Activated CD4-positive, alpha-beta T cell treated with anti-CD3 and anti-CD28 coated beads, Interleukin-2, amount 10 ng/mL, durations not matched to agents 24 days and 14 days (primary cell): ENCODE measurements at regions of chr17 and their contacts with region 1.

Region 1: DNA sequence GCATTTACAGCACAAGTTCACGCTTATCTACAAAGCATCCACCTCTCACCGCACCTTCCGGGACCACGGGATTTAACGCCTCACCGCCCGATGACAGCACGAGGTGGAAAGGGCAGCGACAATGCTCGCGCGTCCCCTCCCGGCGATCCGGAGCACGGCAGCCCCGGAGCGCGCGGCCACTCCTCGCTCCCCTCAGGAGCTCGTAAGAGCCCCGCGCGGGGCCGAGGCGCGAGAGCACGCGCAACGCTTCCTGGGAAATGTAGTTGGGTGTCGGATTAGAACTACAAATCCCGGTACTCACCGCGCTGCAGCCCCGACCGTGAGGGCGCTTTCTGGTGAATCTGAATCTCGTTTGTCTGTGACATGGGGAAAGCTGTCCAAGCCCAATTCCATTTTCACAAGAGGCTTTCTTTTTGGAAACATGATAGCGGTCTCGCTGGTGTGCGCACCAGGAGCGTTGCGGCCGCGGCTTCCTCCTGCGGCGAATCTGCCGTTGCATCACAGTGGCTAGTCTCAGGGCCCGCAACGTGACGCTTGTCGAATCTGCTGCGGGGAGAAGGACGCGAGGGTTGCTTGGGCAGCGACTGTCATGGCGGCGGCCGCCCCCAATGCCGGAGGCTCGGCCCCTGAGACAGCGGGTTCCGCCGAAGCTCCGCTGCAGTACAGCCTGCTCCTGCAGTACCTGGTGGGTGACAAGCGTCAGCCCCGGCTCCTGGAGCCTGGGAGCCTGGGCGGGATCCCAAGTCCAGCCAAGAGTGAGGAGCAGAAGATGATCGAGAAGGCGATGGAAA is at the start of gene TIMM22:
- DNase-seq: peak; percentile 97
- H3K4me3 Mint-ChIP-seq: peak within 1 kb of the TSS; percentile 99
- H3K27ac Mint-ChIP-seq: peak within 1 kb of the TSS; percentile 98
- H3K4me1 Mint-ChIP-seq: peaks cover 18% of the 10 kb centered on the region
- H3K27me3 Mint-ChIP-seq: no peaks in the 10 kb centered on the region
- total RNA-seq, gene TIMM22: 14.7 and 15.7 TPM in 2 replicates

Region 2: GRCh38 chr17:416293-417206 is 580.2 kb before region 1 on chr17:
- intact Hi-C with region 1: loop called (anchors 2 kb)
- DNase-seq: peak; percentile 91
- H3K4me3 Mint-ChIP-seq: peak overlapping the region; percentile 93
- H3K27ac Mint-ChIP-seq: peak overlapping the region; percentile 100
- H3K4me1 Mint-ChIP-seq: peaks cover 79% of the 10 kb centered on the region
- H3K27me3 Mint-ChIP-seq: no peaks in the 10 kb centered on the region

Region 3: GRCh38 chr17:752002-752619 is 244.6 kb before region 1 on chr17 and contains the start of gene GEMIN4:
- intact Hi-C with region 1: loop called (anchors 1 kb)
- DNase-seq: peak; percentile 100
- H3K4me3 Mint-ChIP-seq: peak within 1 kb of the TSS; percentile 100
- H3K27ac Mint-ChIP-seq: peak within 1 kb of the TSS; percentile 98
- H3K4me1 Mint-ChIP-seq: peaks cover 35% of the 10 kb centered on the region
- H3K27me3 Mint-ChIP-seq: no peaks in the 10 kb centered on the region
- total RNA-seq, gene GEMIN4: 71.4 and 80.3 TPM in 2 replicates

Region 4: GRCh38 chr17:794876-795275 is 201.9 kb before region 1 on chr17:
- intact Hi-C with region 1: loop called (anchors 5 kb)
- DNase-seq: peak; percentile 82
- H3K4me3 Mint-ChIP-seq: no peak overlapping the region
- H3K27ac Mint-ChIP-seq: no peak overlapping the region
- H3K4me1 Mint-ChIP-seq: peaks cover 4% of the 10 kb centered on the region
- H3K27me3 Mint-ChIP-seq: no peaks in the 10 kb centered on the region

Region 5: DNA sequence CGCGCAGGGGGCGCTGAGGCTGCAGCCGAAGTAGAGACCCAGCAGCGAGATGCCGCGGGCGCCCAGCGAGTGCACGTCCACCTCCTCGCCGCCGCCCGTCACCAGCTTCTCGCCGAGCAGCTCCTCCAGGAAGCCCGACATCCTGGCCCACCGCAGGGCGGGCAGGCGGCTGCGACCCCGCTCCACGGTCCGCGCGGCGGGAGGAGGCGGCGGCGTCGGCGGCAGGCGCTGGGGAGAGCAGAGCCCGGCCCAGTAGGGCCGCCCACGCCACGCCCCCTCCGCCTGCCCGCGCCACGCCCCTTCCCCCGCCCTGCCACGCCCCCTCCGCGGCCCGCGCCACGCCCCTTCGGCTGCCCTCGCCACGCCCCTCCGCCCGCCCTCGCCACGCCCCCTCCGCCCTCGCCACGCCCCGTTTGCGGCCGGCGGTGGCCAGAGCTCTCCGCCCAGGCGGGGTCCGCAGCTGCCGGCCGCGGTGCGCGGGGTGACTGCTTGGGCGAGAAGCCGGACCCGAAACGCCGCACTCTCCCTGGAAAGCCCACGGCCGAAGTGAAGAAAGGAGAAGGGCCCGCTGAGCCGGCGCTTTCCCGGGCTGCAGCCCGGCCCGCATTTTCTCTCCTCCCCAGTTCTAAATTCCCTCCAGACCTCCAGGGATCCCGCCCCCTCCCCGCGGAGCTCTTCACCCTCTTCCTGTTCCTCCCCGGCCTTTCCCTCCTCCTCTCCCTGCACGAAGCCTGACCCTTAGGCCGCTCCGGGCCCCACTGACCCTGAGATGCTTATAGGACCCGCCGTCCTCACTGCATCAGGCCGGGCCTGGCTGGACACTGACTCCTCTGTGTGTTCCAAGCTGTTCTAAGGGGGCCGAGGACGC is 17.0 kb before region 1 on chr17 and contains the start of gene NXN:
- intact Hi-C with region 1: loop called (anchors 1 kb)
- DNase-seq: peak; percentile 96
- H3K4me3 Mint-ChIP-seq: peak within 1 kb of the TSS; percentile 81
- H3K27ac Mint-ChIP-seq: no peak within 1 kb of the TSS
- H3K4me1 Mint-ChIP-seq: peaks cover 12% of the 10 kb centered on the region
- H3K27me3 Mint-ChIP-seq: peaks cover 34% of the 10 kb centered on the region
- total RNA-seq, gene NXN: 0.14 and 0.28 TPM in 2 replicates

Region 6: GRCh38 chr17:1197781-1198490 is 201.2 kb after region 1 on chr17:
- intact Hi-C with region 1: no loop called
- DNase-seq: peak; percentile 89
- H3K4me3 Mint-ChIP-seq: peak overlapping the region; percentile 19
- H3K27ac Mint-ChIP-seq: peak overlapping the region; percentile 70
- H3K4me1 Mint-ChIP-seq: peaks cover 38% of the 10 kb centered on the region
- H3K27me3 Mint-ChIP-seq: peaks cover 1% of the 10 kb centered on the region